ENCODE measurements at regions of chr1 and their contacts with region 1.

Region 1: GRCh38 chr1:112955781-112956543 is at the start of gene SLC16A1:
- DNase-seq: peak; percentile 90
- H3K4me3 Mint-ChIP-seq: peak within 1 kb of the TSS; percentile 90
- H3K27ac Mint-ChIP-seq: peak within 1 kb of the TSS; percentile 100
- H3K4me1 Mint-ChIP-seq: peaks cover 59% of the 10 kb centered on the region
- H3K27me3 Mint-ChIP-seq: no peaks in the 10 kb centered on the region
- total RNA-seq, gene SLC16A1: 73.6 and 77.4 TPM in 2 replicates

Region 2: DNA sequence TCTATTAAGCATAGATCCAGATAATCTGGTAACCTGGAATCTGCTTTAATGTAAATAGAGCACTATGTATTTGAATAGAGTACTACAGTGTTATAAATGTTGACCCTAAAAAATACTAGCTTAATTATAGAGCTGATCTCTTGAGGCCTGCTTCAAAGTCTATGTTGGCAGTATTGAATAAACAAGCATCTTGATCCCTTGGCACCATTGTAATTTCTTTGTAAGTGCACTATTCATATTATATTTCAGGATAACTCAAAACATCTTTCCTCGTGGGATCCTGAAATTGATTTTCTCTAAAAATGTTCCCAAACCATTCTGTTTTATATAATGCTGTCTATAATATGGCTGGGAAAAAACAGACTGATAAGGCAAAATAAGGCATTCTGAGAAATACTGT is 549.2 kb before region 1 on chr1:
- intact Hi-C with region 1: no loop called
- DNase-seq: no peak
- H3K4me3 Mint-ChIP-seq: no peak overlapping the region
- H3K27ac Mint-ChIP-seq: no peak overlapping the region
- H3K4me1 Mint-ChIP-seq: peaks cover 7% of the 10 kb centered on the region
- H3K27me3 Mint-ChIP-seq: peaks cover 8% of the 10 kb centered on the region

Region 3: GRCh38 chr1:112619520-112620376 is 336.2 kb before region 1 on chr1 and contains the start of gene CAPZA1:
- intact Hi-C with region 1: loop called (anchors 1 kb)
- DNase-seq: peak; percentile 90
- H3K4me3 Mint-ChIP-seq: peak within 1 kb of the TSS; percentile 98
- H3K27ac Mint-ChIP-seq: peak within 1 kb of the TSS; percentile 98
- H3K4me1 Mint-ChIP-seq: peaks cover 48% of the 10 kb centered on the region
- H3K27me3 Mint-ChIP-seq: no peaks in the 10 kb centered on the region
- total RNA-seq, gene CAPZA1: 239 and 242 TPM in 2 replicates

Region 4: GRCh38 chr1:112904071-112904830 is 51.7 kb before region 1 on chr1:
- intact Hi-C with region 1: loop called (anchors 1 kb)
- DNase-seq: peak; percentile 36
- H3K4me3 Mint-ChIP-seq: peak overlapping the region; percentile 2
- H3K27ac Mint-ChIP-seq: peak overlapping the region; percentile 73
- H3K4me1 Mint-ChIP-seq: peaks cover 32% of the 10 kb centered on the region
- H3K27me3 Mint-ChIP-seq: peaks cover 2% of the 10 kb centered on the region

Region 5: DNA sequence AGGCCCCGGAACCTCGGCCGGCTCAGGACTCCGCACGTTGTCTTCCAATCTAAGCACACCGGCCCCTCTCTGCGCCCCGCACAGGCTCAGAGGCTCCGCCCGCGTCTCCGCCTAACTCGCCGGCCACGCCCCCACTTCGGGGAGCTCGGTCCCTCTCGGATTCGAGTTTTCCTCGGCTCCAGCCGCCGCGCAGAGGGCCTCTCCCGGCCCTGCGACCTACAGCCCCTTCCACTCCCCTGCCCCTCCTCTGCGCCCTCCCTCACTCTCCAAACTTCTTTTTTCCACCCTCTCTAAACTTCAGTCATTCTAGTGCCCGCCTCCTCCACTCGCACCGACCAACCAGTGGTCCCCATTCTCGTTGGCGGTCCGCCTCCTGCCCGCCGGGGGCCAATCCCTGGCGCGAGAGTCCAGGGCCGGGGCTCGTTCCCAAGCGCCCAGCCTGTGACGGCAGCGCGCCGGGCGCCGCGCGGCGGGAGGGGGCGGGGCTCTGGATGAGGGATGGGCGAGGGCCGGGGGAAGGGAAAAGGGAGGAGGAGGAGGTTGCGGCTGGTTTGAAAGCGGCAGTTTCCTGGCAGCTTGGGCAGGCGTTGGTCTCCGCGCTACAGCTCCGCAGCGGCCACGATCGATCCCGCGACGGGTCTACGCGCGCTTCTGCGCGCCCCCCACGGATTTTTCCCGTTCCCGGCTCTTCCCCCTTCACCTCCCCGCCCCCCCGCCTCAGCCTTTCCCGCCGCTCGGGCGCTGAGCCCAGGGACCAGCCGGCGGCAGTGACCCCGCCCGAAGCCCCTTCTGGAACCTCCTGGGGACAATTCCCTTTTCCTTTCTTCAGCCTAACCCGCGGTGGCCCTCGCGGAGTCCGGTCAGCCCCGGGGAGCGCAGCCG is 434.2 kb after region 1 on chr1 and contains the start of gene MAGI3:
- intact Hi-C with region 1: loop called (anchors 5 kb)
- DNase-seq: peak; percentile 95
- H3K4me3 Mint-ChIP-seq: peak within 1 kb of the TSS; percentile 88
- H3K27ac Mint-ChIP-seq: peak within 1 kb of the TSS; percentile 79
- H3K4me1 Mint-ChIP-seq: peaks cover 30% of the 10 kb centered on the region
- H3K27me3 Mint-ChIP-seq: peaks cover 33% of the 10 kb centered on the region
- total RNA-seq, gene MAGI3: 3.0 and 3.2 TPM in 2 replicates

Region 6: GRCh38 chr1:113904674-113905434 is 948.9 kb after region 1 on chr1 and contains the starts of genes AP4B1 and DCLRE1B:
- intact Hi-C with region 1: loop called (anchors 10 kb)
- DNase-seq: peak; percentile 98
- H3K4me3 Mint-ChIP-seq: peak within 1 kb of the TSS; percentile 99
- H3K27ac Mint-ChIP-seq: peak within 1 kb of the TSS; percentile 95
- H3K4me1 Mint-ChIP-seq: peaks cover 58% of the 10 kb centered on the region
- H3K27me3 Mint-ChIP-seq: no peaks in the 10 kb centered on the region
- total RNA-seq, gene AP4B1: 36.3 and 40.9 TPM in 2 replicates
- total RNA-seq, gene DCLRE1B: 20.9 and 21.2 TPM in 2 replicates